PC-3 (cell line): ENCODE measurements at regions of chr9 and their contacts with region 1.

Region 1: DNA sequence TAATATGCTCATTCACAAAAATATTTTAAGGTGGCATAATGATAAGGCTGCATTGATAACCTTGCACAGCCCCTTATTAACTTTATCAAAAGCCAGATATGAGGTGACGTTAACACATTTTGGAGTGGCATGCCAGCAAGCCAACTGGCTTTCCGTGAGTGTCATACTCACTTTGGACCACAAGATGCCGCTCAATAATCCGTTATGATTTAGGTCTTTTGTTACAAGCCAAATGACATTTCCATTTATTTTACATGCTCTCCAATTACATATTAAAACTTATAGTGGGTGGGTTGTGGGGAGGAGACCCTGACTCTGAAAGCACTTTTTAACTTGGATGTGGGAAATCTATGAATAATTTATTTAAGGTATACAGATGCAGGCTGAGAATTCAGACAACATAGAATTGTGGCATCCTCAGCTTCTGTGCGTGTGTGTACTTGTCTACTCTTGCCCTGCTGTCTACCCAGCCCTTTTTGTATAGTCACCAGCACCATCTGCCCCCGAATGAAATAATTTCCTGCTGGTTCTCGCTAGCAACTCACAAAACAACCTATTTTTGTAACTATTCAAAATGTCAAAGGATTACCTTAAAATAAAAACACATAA is 305.1 kb downstream of the PSAT1 start:
- DNase-seq: peak; percentile 70
- ATAC-seq: peak; percentile 35; the same call in 1 of the 2 replicates
- H3K4me3 ChIP-seq: no peak overlapping the region
- H3K27ac ChIP-seq: no peak overlapping the region
- H3K4me1 ChIP-seq: 0 out of 2 replicates have a peak, but pooled peaks cover 4% of the 10 kb centered on the region
- H3K27me3 ChIP-seq: no peaks in the 10 kb centered on the region
- CTCF ChIP-seq: peak; percentile 83

Region 2: DNA sequence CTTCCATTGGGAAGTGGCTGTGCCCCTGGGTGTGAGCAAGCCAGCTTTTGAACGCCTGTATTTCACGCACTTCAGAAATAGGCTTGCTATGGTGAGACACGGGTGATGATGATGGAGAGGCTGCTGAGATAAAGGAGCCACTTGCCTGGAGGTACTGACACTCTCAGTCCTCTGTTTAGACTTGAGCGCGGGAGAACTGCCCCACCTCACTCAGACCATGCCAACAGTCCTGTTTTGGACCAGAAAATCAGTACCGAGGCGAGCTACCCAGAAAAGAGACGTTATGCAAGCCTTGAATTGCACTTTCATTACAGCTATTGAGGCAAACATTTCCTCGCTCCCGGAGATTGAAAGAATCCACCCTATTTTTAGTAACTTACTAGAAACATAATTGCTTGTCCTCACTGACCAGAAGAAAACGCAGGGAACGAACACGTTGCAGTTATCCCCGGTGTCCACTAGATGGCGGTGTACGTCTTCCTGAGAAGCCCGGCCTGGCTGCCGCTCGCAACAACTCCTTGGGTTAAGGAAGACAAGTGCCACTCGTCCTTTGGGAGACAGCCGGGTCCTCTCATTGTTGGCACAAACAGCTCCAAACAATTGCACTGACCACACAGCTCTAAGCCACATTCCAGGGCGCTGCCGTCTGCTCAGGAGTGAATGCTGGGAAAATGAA is 162.7 kb before region 1 on chr9:
- CTCF ChIA-PET with region 1: interaction called, 3 read pairs
- POLR2A ChIA-PET with region 1: no interaction called
- intact Hi-C with region 1: loop called (anchors 1 kb)
- DNase-seq: peak; percentile 87
- ATAC-seq: peak; percentile 80
- H3K4me3 ChIP-seq: peak overlapping the region; percentile 48; the same call in 1 of the 2 replicates
- H3K27ac ChIP-seq: no peak overlapping the region
- H3K4me1 ChIP-seq: no peaks in the 10 kb centered on the region; the same call in 1 of the 2 replicates
- H3K27me3 ChIP-seq: no peaks in the 10 kb centered on the region
- CTCF ChIP-seq: peak; percentile 89

Region 3: DNA sequence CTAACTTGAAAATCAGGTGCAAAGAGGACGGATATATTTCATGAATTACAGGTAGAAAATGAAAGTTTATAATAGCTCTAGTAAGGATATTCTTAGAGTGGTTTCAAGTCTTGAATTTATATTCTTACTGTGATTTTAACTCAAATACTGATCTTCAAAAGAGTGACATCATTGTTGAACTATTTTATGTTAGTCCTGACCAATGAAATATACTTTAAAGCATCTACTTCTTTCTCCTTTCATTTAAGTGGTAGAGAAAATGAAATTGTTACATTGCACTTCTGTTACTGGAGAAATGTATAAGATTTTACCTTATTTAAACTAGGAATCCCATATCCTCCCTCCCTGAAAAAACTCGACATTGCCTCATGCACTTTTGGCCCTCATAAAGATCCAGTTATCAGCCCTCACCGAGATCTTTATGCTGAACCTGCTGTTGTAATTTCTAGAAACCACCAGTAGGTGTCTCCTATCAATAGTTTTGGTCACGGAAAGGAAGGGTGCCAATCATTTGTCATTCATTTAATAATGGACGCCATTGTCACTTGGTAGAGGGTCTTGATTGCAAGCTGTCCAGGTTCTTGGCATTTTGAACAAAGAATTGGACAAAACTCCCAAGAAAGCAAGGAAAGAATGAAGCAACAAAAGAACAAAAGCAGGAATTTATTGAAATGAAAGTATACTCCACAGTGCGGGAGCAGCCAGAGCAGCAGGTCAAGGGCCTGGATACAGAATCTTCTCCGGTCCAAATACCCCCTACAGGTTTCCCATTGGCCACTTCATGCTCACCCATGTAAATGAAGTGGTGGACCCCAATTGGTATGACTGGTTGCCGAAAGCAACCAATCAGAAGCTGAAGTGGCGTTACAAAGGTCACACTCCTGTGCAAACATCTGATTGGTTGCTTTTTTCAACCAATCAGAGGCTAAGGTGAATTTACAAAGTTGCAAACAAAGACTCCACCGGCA is 219.1 kb after region 1 on chr9:
- CTCF ChIA-PET with region 1: no interaction called
- POLR2A ChIA-PET with region 1: no interaction called
- intact Hi-C with region 1: loop called (anchors 5 kb)
- DNase-seq: peak; percentile 65
- ATAC-seq: 0 out of 2 replicates have a peak, but pooled peaks have one; percentile 29
- H3K4me3 ChIP-seq: no peak overlapping the region
- H3K27ac ChIP-seq: no peak overlapping the region
- H3K4me1 ChIP-seq: no peaks in the 10 kb centered on the region
- H3K27me3 ChIP-seq: no peaks in the 10 kb centered on the region
- CTCF ChIP-seq: peak; percentile 78

Region 4: DNA sequence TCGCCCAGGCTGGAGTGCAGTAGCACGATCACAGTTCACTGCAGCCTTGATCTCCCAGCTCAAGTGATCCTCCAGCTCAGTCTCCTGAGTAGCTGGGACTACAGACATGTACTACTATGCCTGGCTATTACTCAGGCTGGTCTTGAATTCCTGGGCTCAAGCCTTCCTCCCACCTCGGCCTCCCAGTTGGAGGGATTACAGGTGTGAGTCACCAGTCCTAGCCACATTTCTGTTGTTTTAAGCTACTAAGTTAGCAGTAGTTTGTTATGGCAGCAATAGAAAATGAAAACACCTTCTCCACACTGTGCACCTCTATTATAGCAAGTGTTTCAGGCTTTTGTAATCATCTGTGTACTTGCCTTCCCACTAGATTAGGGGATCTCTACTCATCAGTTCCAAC is 380.8 kb after region 1 on chr9:
- CTCF ChIA-PET with region 1: no interaction called
- POLR2A ChIA-PET with region 1: no interaction called
- intact Hi-C with region 1: loop called (anchors 10 kb)
- DNase-seq: peak; percentile 65
- ATAC-seq: peak; percentile 61
- H3K4me3 ChIP-seq: no peak overlapping the region
- H3K27ac ChIP-seq: no peak overlapping the region
- H3K4me1 ChIP-seq: peaks cover 48% of the 10 kb centered on the region
- H3K27me3 ChIP-seq: no peaks in the 10 kb centered on the region
- CTCF ChIP-seq: no peak

Region 5: DNA sequence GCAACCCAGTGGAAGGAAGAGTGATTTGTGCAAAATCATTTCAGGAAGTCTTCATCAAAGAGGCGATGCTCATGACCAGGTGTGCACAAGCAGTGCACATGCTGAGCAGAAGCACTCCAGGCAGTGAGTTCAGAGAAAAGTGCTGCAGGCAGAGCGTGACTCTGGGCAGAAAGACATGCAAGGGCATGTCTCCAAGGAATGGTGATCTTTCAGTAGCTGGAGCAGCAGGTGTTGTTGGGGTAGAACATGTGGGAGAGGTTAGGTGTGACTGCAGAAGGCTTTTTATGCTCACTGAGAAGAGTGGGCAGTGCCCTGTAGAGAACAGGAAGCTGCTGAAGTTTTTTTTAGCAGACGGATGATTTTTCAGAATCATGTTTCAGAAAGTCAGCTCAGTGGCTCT is 424.3 kb after region 1 on chr9:
- CTCF ChIA-PET with region 1: no interaction called
- POLR2A ChIA-PET with region 1: no interaction called
- intact Hi-C with region 1: loop called (anchors 10 kb)
- DNase-seq: no peak
- ATAC-seq: no peak
- H3K4me3 ChIP-seq: no peak overlapping the region
- H3K27ac ChIP-seq: no peak overlapping the region
- H3K4me1 ChIP-seq: peaks cover 46% of the 10 kb centered on the region
- H3K27me3 ChIP-seq: no peaks in the 10 kb centered on the region
- CTCF ChIP-seq: no peak

Region 6: DNA sequence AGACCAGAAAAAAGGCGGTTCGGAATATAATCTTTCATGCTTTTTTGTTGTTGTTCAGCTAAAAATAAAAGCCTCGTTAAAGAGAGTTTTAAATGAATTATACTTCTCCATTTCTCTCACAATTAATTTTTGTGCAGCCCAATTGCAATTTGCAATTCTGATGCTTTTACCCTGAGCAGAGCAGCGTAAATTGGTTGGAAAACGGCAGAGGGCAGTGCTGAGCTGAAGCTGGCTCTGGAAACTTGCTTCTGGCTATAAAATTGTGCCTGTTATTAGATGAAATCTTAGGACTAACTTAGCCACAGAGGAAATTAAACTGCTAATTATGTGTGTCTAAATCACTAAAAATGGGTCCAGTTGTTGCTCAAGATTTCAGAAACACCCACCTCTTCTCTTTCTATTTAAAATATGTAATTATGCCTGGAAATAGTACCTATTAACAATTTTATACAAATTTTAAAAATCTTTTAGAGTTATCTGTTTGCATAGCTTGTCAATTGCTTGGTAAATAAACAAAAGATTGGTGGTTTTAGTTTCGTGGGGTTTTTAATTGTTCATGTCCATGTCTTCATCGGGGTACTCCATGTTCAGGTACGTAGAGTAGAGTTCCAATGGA is 527.9 kb after region 1 on chr9:
- CTCF ChIA-PET with region 1: interaction called, 4 read pairs
- POLR2A ChIA-PET with region 1: no interaction called
- intact Hi-C with region 1: loop called (anchors 5 kb)
- DNase-seq: peak; percentile 66
- ATAC-seq: peak; percentile 63; the same call in 1 of the 2 replicates
- H3K4me3 ChIP-seq: no peak overlapping the region
- H3K27ac ChIP-seq: no peak overlapping the region
- H3K4me1 ChIP-seq: peaks cover 9% of the 10 kb centered on the region; the same call in 1 of the 2 replicates
- H3K27me3 ChIP-seq: no peaks in the 10 kb centered on the region
- CTCF ChIP-seq: peak; percentile 80

Region 7: DNA sequence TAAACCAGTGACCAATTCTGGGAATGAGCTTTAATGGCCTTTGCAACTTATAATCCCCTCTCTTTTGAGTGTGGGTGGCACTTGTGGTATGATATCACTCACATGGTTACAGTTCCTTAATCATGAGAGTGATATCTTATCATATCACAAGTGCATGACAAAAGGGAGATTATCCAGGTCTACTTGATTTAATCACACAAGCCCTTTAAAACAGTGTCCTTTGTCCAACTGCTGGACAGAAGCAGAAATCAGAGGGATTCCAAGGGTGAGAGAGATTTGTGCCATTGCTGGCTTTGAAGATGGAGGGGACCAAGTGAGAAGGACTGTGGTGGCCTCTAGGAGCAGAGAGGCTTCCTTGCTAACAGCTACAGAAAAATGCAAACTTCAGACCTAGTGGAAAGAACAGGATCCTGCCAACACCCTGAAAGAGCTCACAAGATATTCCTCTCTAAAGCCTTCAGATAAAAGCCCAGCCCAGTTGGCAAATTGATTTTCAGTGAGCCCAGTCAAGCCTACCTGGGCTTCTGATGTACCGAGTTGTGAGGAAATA is 690.7 kb after region 1 on chr9:
- CTCF ChIA-PET with region 1: no interaction called
- POLR2A ChIA-PET with region 1: no interaction called
- intact Hi-C with region 1: loop called (anchors 5 kb)
- DNase-seq: peak; percentile 42
- ATAC-seq: peak; percentile 78
- H3K4me3 ChIP-seq: no peak overlapping the region
- H3K27ac ChIP-seq: no peak overlapping the region
- H3K4me1 ChIP-seq: no peaks in the 10 kb centered on the region
- H3K27me3 ChIP-seq: no peaks in the 10 kb centered on the region
- CTCF ChIP-seq: peak; percentile 57; the same call in 1 of the 2 replicates